Activated CD4-positive, alpha-beta memory T cell treated with anti-CD3 and anti-CD28 coated beads for 36 hours (primary cell): ENCODE measurements at regions of chr2 and their contacts with region 1.

Region 1: GRCh38 chr2:2613279-2614199 is 282.5 kb upstream of the MYT1L start:
- DNase-seq: peak; percentile 91
- H3K4me3 Mint-ChIP-seq: peak overlapping the region; percentile 63
- H3K27ac Mint-ChIP-seq: peak overlapping the region; percentile 4
- H3K4me1 Mint-ChIP-seq: peaks cover 4% of the 10 kb centered on the region
- H3K27me3 Mint-ChIP-seq: peaks cover 18% of the 10 kb centered on the region

Region 2: DNA sequence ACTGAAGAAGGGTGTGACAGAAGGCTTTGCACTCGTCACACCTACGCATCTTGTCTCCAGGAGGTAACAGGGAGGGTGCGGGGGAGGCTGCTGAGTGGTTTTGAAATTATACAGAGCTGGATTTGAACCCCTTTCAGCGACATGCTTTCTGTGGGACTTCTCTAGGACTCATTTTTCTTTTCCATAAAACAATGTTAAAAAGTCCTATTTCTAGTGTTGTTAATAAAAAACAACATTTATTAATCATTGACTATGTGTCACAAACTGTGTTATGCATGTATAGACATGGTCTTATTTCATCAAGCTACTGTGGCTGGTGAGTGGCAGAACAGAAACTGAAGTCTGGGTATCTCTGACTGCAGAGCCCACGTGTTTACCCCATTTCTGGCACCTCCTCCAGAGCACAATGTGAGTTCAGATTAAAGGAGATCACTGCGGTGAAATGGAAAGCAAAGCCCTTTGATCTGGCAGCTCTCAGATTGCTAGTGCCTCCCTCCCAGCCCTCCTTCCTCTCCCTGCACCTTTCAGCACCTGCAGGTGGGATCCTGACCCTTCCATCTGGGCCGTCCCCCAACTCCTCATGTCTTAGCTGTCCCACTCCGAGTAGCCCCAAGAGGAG is 33.0 kb after region 1 on chr2:
- CTCF ChIA-PET with region 1: no interaction called
- POLR2A ChIA-PET with region 1: no interaction called
- intact Hi-C with region 1: loop called (anchors 1 kb)
- DNase-seq: peak; percentile 60
- H3K4me3 Mint-ChIP-seq: peak overlapping the region; percentile 18
- H3K27ac Mint-ChIP-seq: peak overlapping the region; percentile 45
- H3K4me1 Mint-ChIP-seq: peaks cover 20% of the 10 kb centered on the region
- H3K27me3 Mint-ChIP-seq: no peaks in the 10 kb centered on the region

Region 3: DNA sequence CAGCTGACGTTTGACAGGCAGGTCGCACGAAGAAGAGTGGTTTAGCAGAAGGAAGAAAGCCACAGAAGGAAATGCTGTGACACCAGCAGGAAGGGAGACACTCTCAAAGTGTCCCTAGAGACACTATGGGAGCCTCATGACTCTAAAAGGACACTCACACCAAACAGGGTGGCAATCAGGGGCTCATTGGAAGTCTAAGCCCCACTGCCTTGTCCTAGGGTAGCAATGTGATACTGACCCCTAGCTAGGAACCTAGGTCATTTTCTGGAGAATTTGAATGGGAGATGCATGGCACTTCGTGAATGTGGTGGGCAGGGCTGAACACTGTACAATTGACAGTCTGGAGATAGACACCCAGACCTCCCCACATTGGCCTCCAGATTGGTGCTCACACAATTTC is 379.1 kb after region 1 on chr2:
- CTCF ChIA-PET with region 1: no interaction called
- POLR2A ChIA-PET with region 1: no interaction called
- intact Hi-C with region 1: no loop called
- DNase-seq: no peak
- H3K4me3 Mint-ChIP-seq: no peak overlapping the region
- H3K27ac Mint-ChIP-seq: no peak overlapping the region
- H3K4me1 Mint-ChIP-seq: no peaks in the 10 kb centered on the region
- H3K27me3 Mint-ChIP-seq: peaks cover 10% of the 10 kb centered on the region